ENCODE measurements at regions of chr2 and their contacts with region 1.

Region 1: GRCh38 chr2:38720613-38721241 is 30.4 kb downstream of the SRSF7 start:
- DNase-seq: no peak
- ATAC-seq: peak; percentile 17
- H3K4me3 Mint-ChIP-seq: no peak overlapping the region
- H3K27ac Mint-ChIP-seq: peak overlapping the region; percentile 37
- H3K4me1 Mint-ChIP-seq: peaks cover 33% of the 10 kb centered on the region
- H3K27me3 Mint-ChIP-seq: no peaks in the 10 kb centered on the region

Region 2: GRCh38 chr2:38682008-38682575 is 38.6 kb before region 1 on chr2:
- CTCF ChIA-PET with region 1: interaction called, 10 read pairs
- POLR2A ChIA-PET with region 1: interaction called, 3 read pairs
- DNase-seq: no peak
- ATAC-seq: peak; percentile 56
- H3K4me3 Mint-ChIP-seq: no peak overlapping the region
- H3K27ac Mint-ChIP-seq: peak overlapping the region; percentile 34
- H3K4me1 Mint-ChIP-seq: peaks cover 42% of the 10 kb centered on the region
- H3K27me3 Mint-ChIP-seq: no peaks in the 10 kb centered on the region

Region 3: GRCh38 chr2:38875576-38876367 is 155.0 kb after region 1 on chr2 and contains the starts of genes DHX57 and MORN2:
- CTCF ChIA-PET with region 1: no interaction called
- POLR2A ChIA-PET with region 1: no interaction called
- DNase-seq: peak; percentile 88
- ATAC-seq: peak; percentile 99
- H3K4me3 Mint-ChIP-seq: peak within 1 kb of the TSS; percentile 99
- H3K27ac Mint-ChIP-seq: peak within 1 kb of the TSS; percentile 93
- H3K4me1 Mint-ChIP-seq: peaks cover 22% of the 10 kb centered on the region
- H3K27me3 Mint-ChIP-seq: no peaks in the 10 kb centered on the region
- total RNA-seq, gene DHX57: 13.4 to 15.3 TPM
- total RNA-seq, gene MORN2: 3.3 to 3.6 TPM

Measured in activated CD8-positive, alpha-beta T cell treated with anti-CD3 and anti-CD28 coated beads, Interleukin-2, amount 10 ng/mL, durations not matched to agents 7 days and 5 days (primary cell).